ENCODE measurements at regions of chr3 and their contacts with region 1.

Region 1: GRCh38 chr3:51637941-51638471 is 33.0 kb upstream of the TEX264 start:
- DNase-seq: peak; percentile 69
- H3K4me3 Mint-ChIP-seq: no peak overlapping the region
- H3K27ac Mint-ChIP-seq: no peak overlapping the region
- H3K4me1 Mint-ChIP-seq: no peaks in the 10 kb centered on the region
- H3K27me3 Mint-ChIP-seq: no peaks in the 10 kb centered on the region

Region 2: DNA sequence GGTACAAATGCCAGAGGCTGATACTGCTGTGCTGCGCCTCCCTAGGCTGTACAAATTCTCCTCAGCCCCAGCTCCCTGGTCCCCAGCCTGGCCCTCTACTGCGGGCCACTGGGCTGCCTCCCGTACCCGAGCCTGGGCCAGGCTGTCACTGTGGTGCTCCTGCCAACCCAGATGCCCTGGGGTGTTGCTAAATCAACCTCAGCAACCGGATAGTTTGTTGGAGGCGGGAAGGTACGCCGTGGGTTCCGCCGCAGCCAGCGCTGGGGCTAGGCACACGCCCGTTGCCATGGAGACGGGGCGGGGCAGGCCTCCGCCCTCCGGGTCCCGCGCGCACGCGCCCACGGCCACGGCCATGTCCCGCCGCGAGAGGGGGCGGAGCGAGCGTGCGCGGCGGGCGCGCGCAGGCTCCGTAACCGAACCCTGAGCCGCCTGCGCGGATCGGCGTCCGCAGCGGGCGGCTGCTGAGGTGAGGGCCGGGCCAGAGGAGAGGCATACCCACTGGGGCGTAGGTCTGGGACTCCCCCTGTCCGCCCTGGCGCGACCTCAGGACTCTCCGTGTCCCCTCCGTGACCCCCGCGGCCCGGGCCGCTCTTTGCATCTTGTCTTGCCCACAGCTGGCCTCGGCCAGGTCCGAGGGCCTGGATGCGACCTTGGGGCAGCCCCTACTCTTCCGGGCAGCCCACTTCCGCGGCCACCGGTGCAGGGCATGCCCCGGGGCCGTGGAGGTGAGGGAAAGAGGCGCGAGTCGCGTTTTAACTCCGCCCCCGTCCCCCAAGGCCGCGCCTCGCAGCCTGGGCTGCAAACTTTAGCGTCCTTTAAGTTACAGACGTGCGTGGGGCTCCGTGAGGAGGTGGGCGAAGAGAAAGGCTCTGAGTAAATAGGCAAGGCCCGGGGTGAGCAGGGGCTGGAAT is 33.1 kb after region 1 on chr3 and contains the start of gene TEX264:
- CTCF ChIA-PET with region 1: interaction called, 50 read pairs
- DNase-seq: peak; percentile 95
- H3K4me3 Mint-ChIP-seq: peak within 1 kb of the TSS; percentile 84
- H3K27ac Mint-ChIP-seq: peak within 1 kb of the TSS; percentile 90
- H3K4me1 Mint-ChIP-seq: peaks cover 76% of the 10 kb centered on the region
- H3K27me3 Mint-ChIP-seq: no peaks in the 10 kb centered on the region

Region 3: DNA sequence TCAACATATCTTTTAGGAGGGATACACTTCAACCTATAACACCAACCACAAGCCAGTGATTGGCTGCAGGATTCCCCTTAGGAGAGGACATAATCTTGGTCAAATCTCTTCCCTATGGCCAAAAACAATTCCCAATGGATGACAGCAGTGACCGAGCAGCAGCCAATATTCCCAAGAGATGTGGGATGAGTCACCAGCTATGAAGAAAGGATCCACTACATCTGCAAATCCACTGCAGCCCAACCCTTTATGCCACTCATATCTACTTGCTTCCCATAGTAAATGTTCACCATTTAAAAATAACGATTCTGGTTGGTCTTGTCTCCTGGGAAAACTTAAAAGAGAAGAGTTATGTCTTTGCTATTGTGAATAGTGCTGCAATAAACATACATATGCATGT is 241.9 kb after region 1 on chr3:
- CTCF ChIA-PET with region 1: no interaction called
- DNase-seq: no peak
- H3K4me3 Mint-ChIP-seq: no peak overlapping the region
- H3K27ac Mint-ChIP-seq: no peak overlapping the region
- H3K4me1 Mint-ChIP-seq: no peaks in the 10 kb centered on the region
- H3K27me3 Mint-ChIP-seq: peaks cover 34% of the 10 kb centered on the region

Measured in activated naive CD4-positive, alpha-beta T cell treated with anti-CD3 and anti-CD28 coated beads, Interleukin-2, amount 10 ng/mL, durations not matched to agents 7 days and 5 days (primary cell).